ENCODE measurements at regions of chr2 and their contacts with region 1.

Region 1: DNA sequence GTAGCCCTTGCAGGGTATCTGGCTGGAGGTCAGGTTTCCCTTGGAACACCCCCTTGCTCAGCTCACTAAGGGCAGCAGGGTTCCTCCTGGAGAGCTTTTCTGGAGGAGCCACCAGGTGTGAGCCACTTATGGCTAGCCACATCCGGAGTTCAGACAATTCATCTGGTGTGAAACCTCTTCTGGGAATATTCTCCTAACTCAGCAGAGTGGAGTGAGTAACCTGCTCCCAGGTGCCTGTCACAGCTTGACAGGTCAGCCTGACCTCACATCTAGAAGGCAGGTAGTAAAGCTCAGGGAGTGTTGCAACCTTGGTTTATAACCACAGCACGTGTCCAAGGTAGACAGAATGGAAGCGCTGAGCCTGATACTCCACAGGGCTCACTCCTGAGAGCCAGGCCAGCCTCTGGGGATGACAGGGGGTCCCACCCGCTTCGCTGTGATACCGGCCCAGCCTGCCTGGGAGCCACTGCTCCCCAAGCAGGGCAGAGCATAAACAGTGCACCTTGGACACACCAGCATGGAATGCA is 62.6 kb upstream of the TGFA start:
- DNase-seq: no peak
- H3K4me3 ChIP-seq: no peak overlapping the region
- H3K4me3 Mint-ChIP-seq: no peak overlapping the region
- H3K27ac ChIP-seq: no peak overlapping the region
- H3K27ac Mint-ChIP-seq: no peak overlapping the region
- H3K4me1 ChIP-seq: no peaks in the 10 kb centered on the region
- H3K4me1 Mint-ChIP-seq: no peaks in the 10 kb centered on the region
- H3K27me3 ChIP-seq: no peaks in the 10 kb centered on the region
- H3K27me3 Mint-ChIP-seq: peaks cover 4 to 19% of the 10 kb centered on the region in 2 donors

Region 2: GRCh38 chr2:70340921-70341765 is 275.1 kb before region 1 on chr2:
- CTCF ChIA-PET with region 1: interaction called, 125 read pairs
- POLR2A ChIA-PET with region 1: no interaction called
- intact Hi-C with region 1: loop called (anchors 1 kb)
- DNase-seq: peak; percentile 41 to 50 (median 47)
- H3K4me3 ChIP-seq: no peak overlapping the region
- H3K4me3 Mint-ChIP-seq: peak overlapping the region in 1 of 8 donors; percentile 0
- H3K27ac ChIP-seq: no peak overlapping the region
- H3K27ac Mint-ChIP-seq: no peak overlapping the region
- H3K4me1 ChIP-seq: no peaks in the 10 kb centered on the region
- H3K4me1 Mint-ChIP-seq: peaks cover 0 to 2% (median under 1%) of the 10 kb centered on the region in 4 donors
- H3K27me3 ChIP-seq: no peaks in the 10 kb centered on the region
- H3K27me3 Mint-ChIP-seq: peaks cover 5 to 12% of the 10 kb centered on the region in 2 donors

Region 3: GRCh38 chr2:70553584-70554337 is 62.5 kb before region 1 on chr2 and contains the start of gene TGFA:
- CTCF ChIA-PET with region 1: interaction called, 4 read pairs
- POLR2A ChIA-PET with region 1: no interaction called
- intact Hi-C with region 1: loop called (anchors 1 kb)
- DNase-seq: peak; percentile 63 to 73 (median 65)
- H3K4me3 ChIP-seq: peak within 1 kb of the TSS; percentile 47 to 62
- H3K4me3 Mint-ChIP-seq: peak within 1 kb of the TSS; percentile 87 to 96 (median 91)
- H3K27ac ChIP-seq: peak within 1 kb of the TSS; percentile 45
- H3K27ac Mint-ChIP-seq: peak within 1 kb of the TSS; percentile 80 to 94 (median 88)
- H3K4me1 ChIP-seq: peaks cover 26% of the 10 kb centered on the region
- H3K4me1 Mint-ChIP-seq: peaks cover 14 to 40% (median 26%) of the 10 kb centered on the region in 4 donors
- H3K27me3 ChIP-seq: peaks cover 5% of the 10 kb centered on the region
- H3K27me3 Mint-ChIP-seq: peaks cover 3 to 19% of the 10 kb centered on the region in 2 donors
- total RNA-seq, gene TGFA: 2.9 to 4.2 TPM

Region 4: GRCh38 chr2:70627211-70627902 is 11.1 kb after region 1 on chr2:
- CTCF ChIA-PET with region 1: interaction called, 13 read pairs
- POLR2A ChIA-PET with region 1: no interaction called
- intact Hi-C with region 1: no loop called
- DNase-seq: no peak
- H3K4me3 ChIP-seq: no peak overlapping the region
- H3K4me3 Mint-ChIP-seq: no peak overlapping the region
- H3K27ac ChIP-seq: no peak overlapping the region
- H3K27ac Mint-ChIP-seq: no peak overlapping the region
- H3K4me1 ChIP-seq: no peaks in the 10 kb centered on the region
- H3K4me1 Mint-ChIP-seq: no peaks in the 10 kb centered on the region
- H3K27me3 ChIP-seq: no peaks in the 10 kb centered on the region
- H3K27me3 Mint-ChIP-seq: peaks cover 5 to 6% of the 10 kb centered on the region in 2 donors

Region 5: DNA sequence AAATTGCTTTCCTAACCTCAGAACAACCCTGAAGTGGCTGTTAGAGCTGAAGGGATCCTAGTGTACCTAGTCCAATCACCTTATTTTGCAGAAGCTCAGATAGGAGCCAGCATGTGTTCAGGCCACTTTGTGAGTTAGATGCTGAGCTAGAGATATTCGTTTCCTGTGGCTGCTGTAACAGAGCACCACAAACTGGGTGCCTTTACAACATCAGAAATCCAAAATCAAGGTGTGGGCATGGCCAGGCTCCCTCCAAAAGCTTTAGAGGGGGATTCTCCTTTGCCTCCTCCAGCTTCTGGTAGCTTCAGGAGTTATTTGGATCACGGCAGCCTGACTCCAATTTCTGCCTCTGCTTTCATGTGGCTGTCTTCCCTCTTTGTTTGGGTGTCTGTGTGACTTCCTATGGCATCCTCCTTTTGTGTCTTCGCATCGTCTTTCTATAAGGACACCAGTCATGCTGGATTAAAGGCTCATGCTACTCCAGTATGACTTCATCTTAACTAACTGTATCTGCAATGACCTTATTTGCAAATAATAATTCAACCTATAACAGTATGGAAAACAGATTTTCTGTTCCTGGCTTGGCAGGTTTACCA is 23.7 kb after region 1 on chr2:
- CTCF ChIA-PET with region 1: interaction called, 42 read pairs
- POLR2A ChIA-PET with region 1: interaction called, 9 read pairs
- intact Hi-C with region 1: no loop called
- DNase-seq: no peak
- H3K4me3 ChIP-seq: no peak overlapping the region
- H3K4me3 Mint-ChIP-seq: peak overlapping the region in 5 of 8 donors; percentile 0 to 53 (median 34)
- H3K27ac ChIP-seq: no peak overlapping the region
- H3K27ac Mint-ChIP-seq: peak overlapping the region in 4 of 7 donors; percentile 4 to 67 (median 30)
- H3K4me1 ChIP-seq: peaks cover 29% of the 10 kb centered on the region
- H3K4me1 Mint-ChIP-seq: peaks cover 18 to 32% (median 25%) of the 10 kb centered on the region in 4 donors
- H3K27me3 ChIP-seq: no peaks in the 10 kb centered on the region
- H3K27me3 Mint-ChIP-seq: peaks cover 0 to 1% of the 10 kb centered on the region in 2 donors

Region 6: DNA sequence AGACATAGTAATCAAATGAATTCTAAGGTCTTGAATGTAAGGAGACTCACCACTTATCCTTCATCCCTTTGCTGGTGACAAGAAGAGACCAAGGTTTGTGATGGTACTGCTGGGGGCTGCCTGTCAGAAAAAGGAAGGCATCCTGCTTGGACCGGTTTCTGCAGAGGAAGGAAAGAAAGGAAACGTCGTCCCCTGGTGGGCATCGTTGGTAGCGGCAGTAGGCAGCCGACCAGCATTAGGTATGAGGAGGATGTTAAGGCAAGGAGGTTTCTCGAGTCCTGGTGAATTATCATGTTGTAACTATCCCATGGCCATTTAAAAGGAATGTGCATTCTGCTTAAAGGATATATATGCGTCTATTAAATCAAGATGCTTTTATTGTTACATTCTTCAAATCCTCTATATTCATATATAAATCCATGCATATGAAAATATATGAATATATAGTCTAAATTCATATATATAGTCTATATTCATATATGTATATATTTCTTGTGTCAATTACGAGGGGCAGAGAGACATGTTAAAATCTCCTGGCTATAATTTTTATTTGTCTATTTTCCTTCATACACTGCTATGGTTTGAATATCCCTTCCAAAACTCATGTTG is 31.7 kb after region 1 on chr2:
- CTCF ChIA-PET with region 1: interaction called, 42 read pairs
- POLR2A ChIA-PET with region 1: no interaction called
- intact Hi-C with region 1: loop called (anchors 1 kb)
- DNase-seq: peak; percentile 54 to 68 (median 63)
- H3K4me3 ChIP-seq: no peak overlapping the region
- H3K4me3 Mint-ChIP-seq: no peak overlapping the region
- H3K27ac ChIP-seq: no peak overlapping the region
- H3K27ac Mint-ChIP-seq: no peak overlapping the region
- H3K4me1 ChIP-seq: no peaks in the 10 kb centered on the region
- H3K4me1 Mint-ChIP-seq: no peaks in the 10 kb centered on the region
- H3K27me3 ChIP-seq: no peaks in the 10 kb centered on the region
- H3K27me3 Mint-ChIP-seq: peaks cover 0 to 4% of the 10 kb centered on the region in 2 donors

Measured in CD4-positive, alpha-beta memory T cell (primary cell).